ENCODE measurements at regions of chr13 and their contacts with region 1.

Region 1: DNA sequence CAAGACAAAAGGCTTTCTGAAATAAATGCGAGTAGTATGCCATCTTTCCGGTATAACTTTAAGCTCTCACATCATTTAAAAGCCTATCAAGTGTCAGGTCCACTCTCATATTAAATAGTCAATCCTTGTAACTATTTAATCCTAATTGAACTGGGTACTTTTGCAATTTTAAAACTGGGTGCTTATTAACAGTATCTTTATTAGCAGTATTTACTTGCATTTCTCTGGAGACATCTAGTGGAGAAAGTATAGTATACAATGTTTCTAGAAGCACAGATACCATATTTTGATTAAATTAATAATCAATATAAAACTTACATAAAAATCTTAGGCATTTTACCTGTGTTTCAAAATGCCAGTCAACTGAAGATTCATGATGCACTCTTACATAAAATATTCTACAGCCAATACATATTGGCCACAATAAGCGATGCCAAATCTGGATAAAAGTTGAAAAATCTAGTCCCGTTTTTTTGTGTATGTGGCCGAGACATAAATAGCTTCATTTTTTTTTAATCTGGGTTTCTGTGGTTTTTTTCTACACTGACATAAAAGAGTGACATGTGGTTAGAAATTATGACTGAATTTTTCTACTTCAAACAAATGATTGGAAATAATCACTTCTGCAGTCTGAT is 4.3 kb upstream of the POSTN start:
- DNase-seq: no peak
- H3K4me3 ChIP-seq: no peak overlapping the region
- H3K27ac ChIP-seq: no peak overlapping the region
- H3K4me1 ChIP-seq: peaks cover 0 to 3% of the 10 kb centered on the region in 2 donors
- H3K27me3 ChIP-seq: no peaks in the 10 kb centered on the region
- CTCF ChIP-seq: peak; percentile 38 to 69 (median 38)

Region 2: DNA sequence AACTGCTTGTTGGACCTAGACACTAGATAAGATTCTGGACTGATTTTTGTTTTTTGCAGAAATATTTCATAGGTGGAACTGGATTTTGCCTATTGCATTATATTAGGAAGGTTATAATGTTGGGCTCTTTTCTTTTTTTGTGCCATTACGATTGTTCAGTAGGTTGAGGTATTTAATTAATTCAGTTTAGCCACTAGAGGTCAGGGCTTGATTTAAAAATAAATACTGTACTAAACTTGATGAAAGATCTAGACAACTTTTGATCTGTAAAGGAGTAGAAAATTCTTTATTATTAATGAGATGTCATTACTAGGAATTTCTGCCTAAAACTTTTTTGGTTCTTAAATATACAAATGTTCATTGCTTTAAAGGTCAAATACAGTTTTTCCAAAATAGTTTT is 528.2 kb before region 1 on chr13:
- intact Hi-C with region 1: loop called (anchors 2 kb)
- DNase-seq: no peak
- H3K4me3 ChIP-seq: no peak overlapping the region
- H3K27ac ChIP-seq: no peak overlapping the region
- H3K4me1 ChIP-seq: no peaks in the 10 kb centered on the region
- H3K27me3 ChIP-seq: no peaks in the 10 kb centered on the region
- CTCF ChIP-seq: peak in 1 of 3 experiments; percentile 47

Region 3: GRCh38 chr13:37109051-37109678 is 493.7 kb before region 1 on chr13:
- intact Hi-C with region 1: loop called (anchors 1 kb)
- DNase-seq: no peak
- H3K4me3 ChIP-seq: no peak overlapping the region
- H3K27ac ChIP-seq: no peak overlapping the region
- H3K4me1 ChIP-seq: peaks cover 0 to 5% of the 10 kb centered on the region in 2 donors
- H3K27me3 ChIP-seq: no peaks in the 10 kb centered on the region
- CTCF ChIP-seq: peak; percentile 40 to 68 (median 55)